GM12878 (cell line): ENCODE measurements at regions of chr5 and their contacts with region 1.

Region 1: GRCh38 chr5:54217826-54218503 is 92.4 kb downstream of the ARL15 start:
- DNase-seq: no peak
- ATAC-seq: peak; percentile 70
- H3K4me3 ChIP-seq: no peak overlapping the region
- H3K27ac ChIP-seq: no peak overlapping the region
- H3K4me1 ChIP-seq: no peaks in the 10 kb centered on the region
- H3K27me3 ChIP-seq: no peaks in the 10 kb centered on the region
- CTCF ChIP-seq: peak; percentile 54 to 78 (median 64); a peak in 5 of 6 replicates
- EP300 ChIP-seq: no peak
- POLR2A ChIP-seq: no peak
- RAD21 ChIP-seq: peak; percentile 68

Region 2: GRCh38 chr5:53481887-53482716 is 735.9 kb before region 1 on chr5:
- CTCF ChIA-PET with region 1: interaction called, 6 read pairs
- POLR2A ChIA-PET with region 1: no interaction called
- RAD21 ChIA-PET with region 1: interaction called, 8 read pairs
- SMC1A ChIA-PET with region 1: interaction called, 3 read pairs
- in situ Hi-C with region 1: no loop called
- intact Hi-C with region 1: loop called (anchors 1 kb)
- DNase-seq: no peak
- ATAC-seq: peak; percentile 82
- H3K4me3 ChIP-seq: peak overlapping the region; percentile 71
- H3K27ac ChIP-seq: no peak overlapping the region
- H3K4me1 ChIP-seq: peaks cover 8% of the 10 kb centered on the region
- H3K27me3 ChIP-seq: peaks cover 4 to 19% of the 10 kb centered on the region in 2 experiments
- CTCF ChIP-seq: peak in 1 of 3 experiments; percentile 15; a peak in 2 of 6 replicates
- EP300 ChIP-seq: no peak
- POLR2A ChIP-seq: no peak
- RAD21 ChIP-seq: no peak

Region 3: GRCh38 chr5:53874409-53874808 is 343.6 kb before region 1 on chr5:
- CTCF ChIA-PET with region 1: no interaction called
- POLR2A ChIA-PET with region 1: no interaction called
- RAD21 ChIA-PET with region 1: no interaction called
- SMC1A ChIA-PET with region 1: no interaction called
- in situ Hi-C with region 1: no loop called
- intact Hi-C with region 1: loop called (anchors 10 kb)
- DNase-seq: no peak
- ATAC-seq: peak; percentile 47; the same call in 2 of the 3 replicates
- H3K4me3 ChIP-seq: no peak overlapping the region
- H3K27ac ChIP-seq: no peak overlapping the region
- H3K4me1 ChIP-seq: no peaks in the 10 kb centered on the region
- H3K27me3 ChIP-seq: no peaks in the 10 kb centered on the region
- CTCF ChIP-seq: peak in 1 of 3 experiments; percentile 7; a peak in 1 of 6 replicates
- EP300 ChIP-seq: no peak
- POLR2A ChIP-seq: no peak
- RAD21 ChIP-seq: peak; percentile 34; the same call in 1 of the 2 replicates

Region 4: DNA sequence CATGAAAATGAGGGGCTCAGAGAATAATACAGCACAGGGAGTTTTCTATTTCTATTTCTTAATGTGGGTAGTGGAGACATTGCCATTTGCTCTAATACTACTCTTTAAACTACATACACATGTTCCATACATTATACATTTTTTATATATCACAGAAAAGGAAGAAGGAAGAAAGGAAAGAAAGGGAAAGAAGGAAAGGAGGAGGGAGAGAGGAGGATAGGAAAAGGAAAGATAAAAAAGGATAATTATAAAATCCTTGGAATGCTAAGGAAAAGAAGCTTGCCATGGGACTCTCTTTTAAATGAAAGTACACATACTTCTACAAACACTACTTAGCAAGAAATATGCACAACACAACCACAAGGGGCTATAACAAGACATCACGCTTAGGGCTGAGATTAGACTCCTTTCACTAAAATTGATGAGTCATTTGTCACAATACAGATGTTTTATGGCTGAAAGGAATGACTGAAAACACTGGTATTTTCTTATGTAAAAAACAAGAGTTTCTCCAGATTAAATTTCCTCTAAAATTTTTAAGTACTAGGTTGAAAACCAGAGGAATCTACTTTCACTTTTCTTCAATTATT is 127.4 kb before region 1 on chr5:
- CTCF ChIA-PET with region 1: no interaction called
- POLR2A ChIA-PET with region 1: no interaction called
- RAD21 ChIA-PET with region 1: no interaction called
- SMC1A ChIA-PET with region 1: no interaction called
- in situ Hi-C with region 1: no loop called
- intact Hi-C with region 1: loop called (anchors 5 kb)
- DNase-seq: no peak
- ATAC-seq: peak; percentile 64
- H3K4me3 ChIP-seq: no peak overlapping the region
- H3K27ac ChIP-seq: no peak overlapping the region
- H3K4me1 ChIP-seq: no peaks in the 10 kb centered on the region; the same call in 1 of the 2 replicates
- H3K27me3 ChIP-seq: no peaks in the 10 kb centered on the region
- CTCF ChIP-seq: peak in 1 of 3 experiments; percentile 10; a peak in 1 of 6 replicates
- EP300 ChIP-seq: no peak
- POLR2A ChIP-seq: no peak
- RAD21 ChIP-seq: no peak

Region 5: DNA sequence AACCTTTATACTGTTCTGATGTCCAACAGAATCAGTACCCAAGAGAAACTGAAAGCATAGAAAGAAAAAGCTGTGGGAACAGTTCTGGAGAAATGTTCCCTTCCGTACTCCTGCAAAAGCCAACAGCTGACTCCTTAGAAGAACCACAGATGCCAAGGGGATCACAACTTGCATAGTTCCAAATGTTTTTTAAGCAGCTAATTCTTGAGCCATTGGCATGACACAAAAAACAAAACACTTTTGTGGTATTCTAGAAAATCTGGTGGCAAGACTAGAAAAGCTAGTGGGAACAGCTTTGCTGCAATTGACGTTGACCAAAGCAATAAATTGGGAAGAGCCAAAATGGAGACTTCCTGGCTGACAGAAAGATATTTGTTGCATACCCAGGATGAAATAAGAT is 97.5 kb before region 1 on chr5:
- CTCF ChIA-PET with region 1: no interaction called
- POLR2A ChIA-PET with region 1: no interaction called
- RAD21 ChIA-PET with region 1: no interaction called
- SMC1A ChIA-PET with region 1: no interaction called
- in situ Hi-C with region 1: no loop called
- intact Hi-C with region 1: no loop called
- DNase-seq: no peak
- ATAC-seq: no peak
- H3K4me3 ChIP-seq: no peak overlapping the region
- H3K27ac ChIP-seq: no peak overlapping the region
- H3K4me1 ChIP-seq: peaks cover 6% of the 10 kb centered on the region
- H3K27me3 ChIP-seq: no peaks in the 10 kb centered on the region
- CTCF ChIP-seq: no peak
- EP300 ChIP-seq: no peak
- POLR2A ChIP-seq: no peak
- RAD21 ChIP-seq: no peak

Region 6: GRCh38 chr5:54242297-54242696 is 24.3 kb after region 1 on chr5:
- CTCF ChIA-PET with region 1: no interaction called
- POLR2A ChIA-PET with region 1: no interaction called
- RAD21 ChIA-PET with region 1: no interaction called
- SMC1A ChIA-PET with region 1: no interaction called
- in situ Hi-C with region 1: no loop called
- intact Hi-C with region 1: no loop called
- DNase-seq: no peak
- ATAC-seq: no peak
- H3K4me3 ChIP-seq: no peak overlapping the region
- H3K27ac ChIP-seq: no peak overlapping the region
- H3K4me1 ChIP-seq: no peaks in the 10 kb centered on the region
- H3K27me3 ChIP-seq: no peaks in the 10 kb centered on the region
- CTCF ChIP-seq: no peak
- EP300 ChIP-seq: no peak
- POLR2A ChIP-seq: no peak
- RAD21 ChIP-seq: no peak